Activated CD4-positive, alpha-beta T cell treated with anti-CD3 and anti-CD28 coated beads, Interleukin-2, amount 10 ng/mL, durations not matched to agents 24 days and 14 days (primary cell): ENCODE measurements at regions of chr9 and their contacts with region 1.

Region 1: GRCh38 chr9:94875300-94876020 is 149.0 kb downstream of the AOPEP start:
- DNase-seq: peak; percentile 51
- H3K4me3 Mint-ChIP-seq: no peak overlapping the region
- H3K27ac Mint-ChIP-seq: peak overlapping the region; percentile 4
- H3K4me1 Mint-ChIP-seq: peaks cover 44% of the 10 kb centered on the region
- H3K27me3 Mint-ChIP-seq: peaks cover 5% of the 10 kb centered on the region

Region 2: DNA sequence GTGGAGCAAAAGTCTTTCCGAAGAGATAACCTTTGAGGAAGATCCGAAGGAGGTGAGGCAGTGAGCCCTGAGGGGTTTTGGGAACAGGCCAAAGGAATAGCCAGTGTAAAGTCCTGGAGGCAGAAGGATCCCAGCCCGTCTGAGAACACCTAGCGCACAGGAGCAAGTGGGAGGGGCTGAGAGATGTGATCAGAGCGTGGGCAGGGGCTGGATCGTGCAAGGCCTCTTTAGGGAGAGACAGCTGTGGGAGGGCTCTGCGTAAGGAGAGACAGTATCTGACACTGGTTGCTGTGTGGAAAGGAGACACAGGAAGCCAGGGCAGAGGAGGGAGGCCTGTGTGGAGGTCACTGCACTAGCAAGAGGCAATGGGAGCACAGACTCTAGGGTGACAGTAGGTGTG is 988.5 kb before region 1 on chr9:
- intact Hi-C with region 1: no loop called
- DNase-seq: no peak
- H3K4me3 Mint-ChIP-seq: no peak overlapping the region
- H3K27ac Mint-ChIP-seq: no peak overlapping the region
- H3K4me1 Mint-ChIP-seq: no peaks in the 10 kb centered on the region
- H3K27me3 Mint-ChIP-seq: peaks cover 8% of the 10 kb centered on the region

Region 3: GRCh38 chr9:94802793-94803192 is 72.7 kb before region 1 on chr9:
- intact Hi-C with region 1: loop called (anchors 1 kb)
- DNase-seq: peak; percentile 63
- H3K4me3 Mint-ChIP-seq: no peak overlapping the region
- H3K27ac Mint-ChIP-seq: peak overlapping the region; percentile 45
- H3K4me1 Mint-ChIP-seq: peaks cover 28% of the 10 kb centered on the region
- H3K27me3 Mint-ChIP-seq: no peaks in the 10 kb centered on the region

Region 4: GRCh38 chr9:94839398-94839797 is 36.1 kb before region 1 on chr9:
- intact Hi-C with region 1: loop called (anchors 2 kb)
- DNase-seq: no peak
- H3K4me3 Mint-ChIP-seq: no peak overlapping the region
- H3K27ac Mint-ChIP-seq: peak overlapping the region; percentile 49
- H3K4me1 Mint-ChIP-seq: peaks cover 24% of the 10 kb centered on the region
- H3K27me3 Mint-ChIP-seq: no peaks in the 10 kb centered on the region

Region 5: GRCh38 chr9:94860968-94861871 is 14.2 kb before region 1 on chr9:
- intact Hi-C with region 1: loop called (anchors 2 kb)
- DNase-seq: peak; percentile 93
- H3K4me3 Mint-ChIP-seq: peak overlapping the region; percentile 74
- H3K27ac Mint-ChIP-seq: peak overlapping the region; percentile 86
- H3K4me1 Mint-ChIP-seq: peaks cover 48% of the 10 kb centered on the region
- H3K27me3 Mint-ChIP-seq: peaks cover 3% of the 10 kb centered on the region

Region 6: DNA sequence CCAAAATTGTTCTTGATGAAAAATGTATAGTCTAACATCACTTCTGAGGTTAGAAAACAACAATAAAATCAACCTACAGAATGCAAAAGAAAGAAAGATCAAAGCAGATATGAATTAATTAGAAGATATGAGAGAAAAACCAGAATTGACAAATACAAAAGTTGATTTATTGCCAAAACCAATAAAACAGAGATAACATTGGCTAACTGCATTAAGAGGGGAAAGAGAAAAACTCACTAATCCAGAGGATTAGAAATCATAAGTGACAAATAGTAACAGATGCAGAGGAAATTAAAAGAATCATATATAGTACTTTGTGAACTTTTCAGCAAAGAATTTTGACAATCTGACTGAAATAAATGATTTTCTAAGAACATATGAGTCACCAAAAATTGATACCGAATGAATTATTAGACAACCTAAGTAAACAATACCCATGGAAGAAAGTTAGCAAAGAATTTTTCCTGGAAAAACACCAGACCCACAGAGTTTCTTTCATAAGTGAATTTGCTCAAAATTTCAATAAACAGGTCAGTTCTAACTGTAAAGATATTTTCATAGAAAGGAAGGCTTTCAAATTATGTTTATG is 18.7 kb after region 1 on chr9:
- intact Hi-C with region 1: loop called (anchors 2 kb)
- DNase-seq: no peak
- H3K4me3 Mint-ChIP-seq: no peak overlapping the region
- H3K27ac Mint-ChIP-seq: no peak overlapping the region
- H3K4me1 Mint-ChIP-seq: peaks cover 7% of the 10 kb centered on the region
- H3K27me3 Mint-ChIP-seq: no peaks in the 10 kb centered on the region

Region 7: GRCh38 chr9:94984891-94985476 is 109.5 kb after region 1 on chr9:
- intact Hi-C with region 1: no loop called
- DNase-seq: no peak
- H3K4me3 Mint-ChIP-seq: no peak overlapping the region
- H3K27ac Mint-ChIP-seq: no peak overlapping the region
- H3K4me1 Mint-ChIP-seq: peaks cover 7% of the 10 kb centered on the region
- H3K27me3 Mint-ChIP-seq: no peaks in the 10 kb centered on the region

Region 8: DNA sequence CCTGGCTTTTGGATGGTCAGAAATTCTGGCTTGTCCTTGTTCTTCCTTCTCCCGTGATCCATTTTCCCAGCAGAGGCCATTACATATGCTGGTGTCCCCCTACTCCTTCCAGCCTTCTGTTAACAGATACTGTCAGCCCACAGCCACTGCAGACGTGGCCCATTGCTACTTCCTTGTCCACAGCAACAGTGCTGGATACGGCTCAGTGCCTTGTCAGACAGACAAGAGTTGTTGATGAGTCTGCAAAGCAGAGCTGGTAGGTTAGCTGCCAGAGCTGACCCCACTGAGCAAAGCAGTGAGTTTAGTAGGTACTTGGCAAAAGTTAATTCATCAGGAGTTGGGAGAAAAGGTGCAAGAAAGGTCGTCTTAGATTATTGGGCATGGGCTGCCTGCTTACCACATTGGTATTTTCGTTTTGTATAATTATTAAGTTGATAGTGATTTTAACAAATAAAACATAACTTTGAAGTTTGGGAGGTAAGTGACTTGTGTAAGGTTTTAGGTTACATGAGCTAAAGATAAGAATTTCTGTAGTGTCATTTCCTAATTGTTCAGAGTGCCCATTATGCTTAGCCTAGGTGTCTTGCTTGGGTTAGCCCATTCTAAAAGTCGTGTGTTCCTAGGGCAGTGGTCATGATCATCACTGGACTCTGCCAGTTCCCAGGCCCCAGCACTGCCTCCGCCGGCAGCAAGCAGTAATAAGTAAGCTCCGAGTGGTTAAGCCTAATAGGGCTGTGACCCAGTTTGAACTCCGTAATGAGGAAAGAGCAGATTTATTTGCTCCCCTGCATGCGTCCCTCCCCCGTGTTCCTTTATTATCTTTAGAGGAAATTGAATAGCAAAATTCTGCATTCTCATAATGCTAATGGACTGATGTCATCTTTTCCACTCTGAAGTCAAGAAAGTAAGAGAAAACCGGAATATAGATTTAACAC is 150.0 kb after region 1 on chr9:
- intact Hi-C with region 1: no loop called
- DNase-seq: no peak
- H3K4me3 Mint-ChIP-seq: no peak overlapping the region
- H3K27ac Mint-ChIP-seq: no peak overlapping the region
- H3K4me1 Mint-ChIP-seq: peaks cover 2% of the 10 kb centered on the region
- H3K27me3 Mint-ChIP-seq: no peaks in the 10 kb centered on the region